Activated naive CD4-positive, alpha-beta T cell treated with anti-CD3 and anti-CD28 coated beads for 36 hours (primary cell): ENCODE measurements at regions of chr7 and their contacts with region 1.

Region 1: GRCh38 chr7:13279854-13280435 is 592.5 kb downstream of the ARL4A start:
- DNase-seq: no peak
- H3K4me3 Mint-ChIP-seq: no peak overlapping the region
- H3K27ac Mint-ChIP-seq: no peak overlapping the region
- H3K4me1 Mint-ChIP-seq: no peaks in the 10 kb centered on the region
- H3K27me3 Mint-ChIP-seq: peaks cover 9% of the 10 kb centered on the region

Region 2: DNA sequence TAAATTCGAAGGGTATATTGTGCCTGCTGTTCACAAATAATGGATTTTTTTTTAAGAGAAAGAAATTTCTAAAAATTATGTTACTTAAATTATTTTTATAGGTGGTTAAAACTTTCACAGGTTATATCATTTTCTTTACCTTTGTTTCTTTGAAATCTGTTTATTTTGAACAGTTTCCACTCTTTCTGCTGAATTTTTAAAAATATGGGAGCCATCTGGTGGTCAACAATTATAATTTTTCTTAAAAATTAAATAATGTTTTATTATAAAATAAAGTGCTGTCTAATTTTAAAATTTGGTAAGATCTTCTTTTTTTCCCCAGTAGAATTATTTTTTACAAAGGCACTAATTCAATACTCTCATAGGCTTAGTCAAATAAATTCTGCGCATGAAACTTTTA is 445.6 kb after region 1 on chr7:
- CTCF ChIA-PET with region 1: no interaction called
- intact Hi-C with region 1: loop called (anchors 5 kb)
- DNase-seq: no peak
- H3K4me3 Mint-ChIP-seq: no peak overlapping the region
- H3K27ac Mint-ChIP-seq: no peak overlapping the region
- H3K4me1 Mint-ChIP-seq: no peaks in the 10 kb centered on the region
- H3K27me3 Mint-ChIP-seq: no peaks in the 10 kb centered on the region

Region 3: DNA sequence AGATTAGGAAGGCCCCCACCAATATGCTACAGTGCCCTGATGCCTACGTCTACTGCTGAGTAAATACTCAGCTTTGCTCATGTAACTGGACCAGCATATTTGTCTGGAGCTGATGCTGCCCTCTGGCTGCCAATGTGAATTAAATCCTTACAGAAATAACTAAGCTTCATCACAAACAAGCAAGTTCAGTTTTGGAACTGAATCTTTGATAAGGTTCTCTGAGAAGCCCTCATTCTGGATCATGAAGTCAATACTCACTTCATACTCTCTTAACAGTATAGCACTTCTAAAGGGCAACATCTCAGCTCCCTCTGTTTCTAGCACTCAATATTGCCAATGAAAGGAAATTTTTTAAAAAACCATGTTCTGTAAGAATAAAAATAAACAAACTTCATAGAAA is 462.9 kb after region 1 on chr7:
- CTCF ChIA-PET with region 1: interaction called, 3 read pairs
- intact Hi-C with region 1: loop called (anchors 2 kb)
- DNase-seq: peak; percentile 14
- H3K4me3 Mint-ChIP-seq: no peak overlapping the region
- H3K27ac Mint-ChIP-seq: no peak overlapping the region
- H3K4me1 Mint-ChIP-seq: no peaks in the 10 kb centered on the region
- H3K27me3 Mint-ChIP-seq: peaks cover 2% of the 10 kb centered on the region

Region 4: GRCh38 chr7:14457568-14458453 is 1177.9 kb after region 1 on chr7:
- CTCF ChIA-PET with region 1: interaction called, 10 read pairs
- intact Hi-C with region 1: loop called (anchors 1 kb)
- DNase-seq: peak; percentile 56
- H3K4me3 Mint-ChIP-seq: no peak overlapping the region
- H3K27ac Mint-ChIP-seq: no peak overlapping the region
- H3K4me1 Mint-ChIP-seq: no peaks in the 10 kb centered on the region
- H3K27me3 Mint-ChIP-seq: no peaks in the 10 kb centered on the region

Region 5: GRCh38 chr7:14691597-14692203 is 1411.8 kb after region 1 on chr7:
- CTCF ChIA-PET with region 1: interaction called, 19 read pairs
- intact Hi-C with region 1: loop called (anchors 1 kb)
- DNase-seq: peak; percentile 59
- H3K4me3 Mint-ChIP-seq: no peak overlapping the region
- H3K27ac Mint-ChIP-seq: no peak overlapping the region
- H3K4me1 Mint-ChIP-seq: no peaks in the 10 kb centered on the region
- H3K27me3 Mint-ChIP-seq: no peaks in the 10 kb centered on the region

Region 6: DNA sequence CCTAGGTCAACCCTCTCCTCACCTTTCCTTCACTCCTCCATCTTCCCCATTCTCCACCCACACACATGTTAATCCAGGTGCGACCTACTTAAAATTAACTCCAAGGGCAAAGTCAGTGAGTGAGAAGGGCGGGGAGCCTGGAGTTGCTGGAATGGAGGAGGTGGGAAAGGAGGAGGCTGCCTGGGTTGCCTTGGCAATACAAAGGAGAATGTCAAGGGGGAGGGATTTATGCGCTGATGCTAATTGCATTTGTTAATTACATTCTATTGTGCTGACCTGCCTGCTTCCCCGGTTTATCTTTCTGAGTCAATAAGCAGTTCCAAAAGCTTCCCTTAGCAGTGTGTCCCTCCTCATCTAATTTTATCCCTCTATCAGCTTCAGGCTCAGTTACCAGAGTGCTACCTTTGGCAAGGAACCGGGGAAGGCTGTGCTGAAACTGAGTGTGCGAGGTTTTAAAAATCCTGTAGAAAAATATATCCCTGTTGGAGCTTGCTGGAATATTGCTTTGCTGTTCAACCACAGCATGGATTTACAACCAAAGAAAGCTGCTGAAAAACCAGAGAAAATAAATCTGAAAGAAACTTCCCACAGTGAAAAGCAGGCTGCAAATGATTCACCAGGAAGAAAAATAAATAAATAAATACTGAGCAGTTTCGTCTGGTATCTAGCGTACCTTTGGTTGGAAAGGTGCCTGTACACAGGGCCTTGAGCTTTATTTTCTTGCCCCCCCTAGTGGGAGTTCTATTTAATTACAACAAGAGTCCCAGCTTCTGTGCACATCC is 1735.8 kb after region 1 on chr7:
- CTCF ChIA-PET with region 1: interaction called, 3 read pairs
- intact Hi-C with region 1: loop called (anchors 10 kb)
- DNase-seq: peak; percentile 6
- H3K4me3 Mint-ChIP-seq: no peak overlapping the region
- H3K27ac Mint-ChIP-seq: no peak overlapping the region
- H3K4me1 Mint-ChIP-seq: no peaks in the 10 kb centered on the region
- H3K27me3 Mint-ChIP-seq: no peaks in the 10 kb centered on the region